ENCODE measurements at regions of chr7 and their contacts with region 1.

Region 1: DNA sequence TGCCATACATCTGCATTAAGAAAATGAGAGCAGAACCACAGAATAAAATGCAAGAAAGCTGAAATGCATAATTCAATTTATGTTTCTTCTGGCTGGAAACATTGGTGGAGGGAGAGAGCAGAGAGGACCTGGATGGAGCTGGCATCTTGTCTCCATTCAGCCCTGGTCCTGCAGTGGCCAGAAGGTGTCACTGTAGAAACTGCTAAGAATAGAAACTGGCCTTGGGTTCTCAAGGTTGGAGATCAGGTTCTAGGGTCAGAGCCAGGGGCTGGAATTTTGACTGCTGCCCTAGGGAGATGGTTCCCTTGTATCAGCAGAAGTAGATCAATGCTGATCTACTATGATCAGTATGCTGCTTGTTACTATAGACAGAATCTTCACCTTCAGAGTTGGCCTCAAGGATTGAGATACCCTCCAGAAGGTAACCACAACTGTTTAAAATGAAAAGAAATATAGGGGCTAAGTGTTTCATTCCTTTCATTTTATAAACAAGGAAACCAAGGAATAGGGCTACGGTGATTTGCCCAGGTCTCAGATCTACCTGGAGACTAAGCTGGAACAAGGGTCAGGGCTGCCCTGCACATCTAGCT is 13.1 kb downstream of the TAS2R41 start:
- DNase-seq: no peak
- ATAC-seq: peak; percentile 82
- H3K4me3 ChIP-seq: no peak overlapping the region
- H3K27ac ChIP-seq: no peak overlapping the region
- H3K4me1 ChIP-seq: peaks cover 5 to 28% of the 10 kb centered on the region in 2 experiments; a peak in 3 of 4 replicates
- H3K27me3 ChIP-seq: no peaks in the 10 kb centered on the region
- CTCF ChIP-seq: peak; percentile 51 to 70 (median 65); a peak in 5 of 6 replicates
- POLR2A ChIP-seq: no peak
- RAD21 ChIP-seq: peak; percentile 60

Region 2: GRCh38 chr7:143467722-143468121 is 23.1 kb before region 1 on chr7:
- CTCF ChIA-PET with region 1: no interaction called
- POLR2A ChIA-PET with region 1: no interaction called
- RAD21 ChIA-PET with region 1: no interaction called
- intact Hi-C with region 1: loop called (anchors 2 kb)
- DNase-seq: no peak
- ATAC-seq: no peak
- H3K4me3 ChIP-seq: no peak overlapping the region
- H3K27ac ChIP-seq: no peak overlapping the region
- H3K4me1 ChIP-seq: peaks cover 9 to 24% of the 10 kb centered on the region in 2 experiments
- H3K27me3 ChIP-seq: no peaks in the 10 kb centered on the region
- CTCF ChIP-seq: no peak
- POLR2A ChIP-seq: no peak
- RAD21 ChIP-seq: no peak

Region 3: GRCh38 chr7:143979205-143979758 is 488.5 kb after region 1 on chr7:
- CTCF ChIA-PET with region 1: no interaction called
- POLR2A ChIA-PET with region 1: no interaction called
- RAD21 ChIA-PET with region 1: no interaction called
- intact Hi-C with region 1: no loop called
- DNase-seq: no peak
- ATAC-seq: no peak
- H3K4me3 ChIP-seq: no peak overlapping the region
- H3K27ac ChIP-seq: no peak overlapping the region
- H3K4me1 ChIP-seq: no peaks in the 10 kb centered on the region
- H3K27me3 ChIP-seq: no peaks in the 10 kb centered on the region
- CTCF ChIP-seq: no peak
- POLR2A ChIP-seq: no peak
- RAD21 ChIP-seq: no peak